Activated CD8-positive, alpha-beta T cell treated with anti-CD3 and anti-CD28 coated beads, Interleukin-2, amount 10 ng/mL, durations not matched to agents 7 days and 5 days (primary cell): ENCODE measurements at regions of chr4 and their contacts with region 1.

Region 1: GRCh38 chr4:80989921-80990544 is 40.5 kb upstream of the BMP3 start:
- DNase-seq: peak; percentile 30
- ATAC-seq: peak; percentile 36
- H3K4me3 Mint-ChIP-seq: no peak overlapping the region
- H3K27ac Mint-ChIP-seq: no peak overlapping the region
- H3K4me1 Mint-ChIP-seq: no peaks in the 10 kb centered on the region
- H3K27me3 Mint-ChIP-seq: no peaks in the 10 kb centered on the region

Region 2: GRCh38 chr4:80360084-80360483 is 629.9 kb before region 1 on chr4:
- CTCF ChIA-PET with region 1: interaction called, 13 read pairs
- POLR2A ChIA-PET with region 1: interaction called, 3 read pairs
- DNase-seq: no peak
- ATAC-seq: no peak
- H3K4me3 Mint-ChIP-seq: no peak overlapping the region
- H3K27ac Mint-ChIP-seq: no peak overlapping the region
- H3K4me1 Mint-ChIP-seq: peaks cover 11% of the 10 kb centered on the region
- H3K27me3 Mint-ChIP-seq: peaks cover 36% of the 10 kb centered on the region

Region 3: DNA sequence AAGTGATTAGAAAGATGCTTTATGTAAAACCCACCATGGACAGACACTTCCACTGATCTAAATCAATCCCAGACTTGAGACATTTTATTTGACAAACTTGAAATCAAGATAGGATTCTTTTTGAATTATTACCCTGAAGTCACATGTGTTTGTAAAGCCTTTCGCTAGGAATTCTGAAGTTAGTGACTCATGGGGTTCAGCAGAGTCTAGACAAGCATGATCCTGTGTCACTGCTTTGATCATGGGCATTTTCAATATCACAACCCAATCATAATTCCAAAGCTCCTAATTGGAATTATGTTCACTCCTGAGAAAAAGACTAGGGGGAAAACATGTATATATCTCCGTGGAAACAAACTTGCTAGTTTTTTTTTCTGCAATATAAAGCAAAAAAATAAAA is 27.0 kb before region 1 on chr4:
- CTCF ChIA-PET with region 1: no interaction called
- POLR2A ChIA-PET with region 1: no interaction called
- DNase-seq: no peak
- ATAC-seq: no peak
- H3K4me3 Mint-ChIP-seq: no peak overlapping the region
- H3K27ac Mint-ChIP-seq: no peak overlapping the region
- H3K4me1 Mint-ChIP-seq: no peaks in the 10 kb centered on the region
- H3K27me3 Mint-ChIP-seq: no peaks in the 10 kb centered on the region